Activated CD8-positive, alpha-beta T cell treated with anti-CD3 and anti-CD28 coated beads for 36 hours (primary cell): ENCODE measurements at regions of chr12 and their contacts with region 1.

Region 1: GRCh38 chr12:32671930-32672780 is 6.9 kb upstream of the DNM1L start:
- DNase-seq: peak; percentile 45
- ATAC-seq: no peak
- H3K4me3 Mint-ChIP-seq: no peak overlapping the region
- H3K27ac Mint-ChIP-seq: no peak overlapping the region
- H3K4me1 Mint-ChIP-seq: no peaks in the 10 kb centered on the region
- H3K27me3 Mint-ChIP-seq: peaks cover 3% of the 10 kb centered on the region
- CTCF ChIP-seq: peak; percentile 42

Region 2: DNA sequence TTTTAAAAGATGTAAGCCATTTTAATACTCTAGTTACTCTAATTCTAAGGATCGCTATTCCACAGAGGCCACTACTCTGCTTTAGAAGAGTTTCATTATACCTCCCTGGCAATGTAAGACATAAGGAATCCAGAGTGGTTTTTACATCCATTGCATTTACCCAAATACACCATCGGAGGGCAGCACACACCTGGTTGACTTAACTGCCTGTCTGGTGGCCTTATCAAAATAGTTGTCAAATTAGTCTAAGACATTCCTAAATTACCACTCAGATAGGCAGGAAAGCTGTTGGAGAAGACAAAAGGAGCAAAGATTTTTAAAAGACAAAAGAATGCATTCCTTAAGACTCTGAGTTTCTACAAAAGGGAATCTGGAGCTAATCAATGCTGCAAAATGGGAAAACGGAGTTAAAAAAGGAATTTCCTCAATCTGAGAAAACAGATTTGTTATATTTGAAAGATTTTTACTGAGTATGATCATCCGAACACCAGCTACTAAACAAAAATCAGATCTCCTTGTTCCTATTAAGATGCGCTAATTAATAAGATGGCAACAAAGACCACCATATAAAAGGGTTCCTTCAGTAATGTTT is 306.6 kb before region 1 on chr12:
- CTCF ChIA-PET with region 1: interaction called, 20 read pairs
- POLR2A ChIA-PET with region 1: no interaction called
- intact Hi-C with region 1: no loop called
- DNase-seq: peak; percentile 61
- ATAC-seq: peak; percentile 79
- H3K4me3 Mint-ChIP-seq: no peak overlapping the region
- H3K27ac Mint-ChIP-seq: no peak overlapping the region
- H3K4me1 Mint-ChIP-seq: no peaks in the 10 kb centered on the region
- H3K27me3 Mint-ChIP-seq: no peaks in the 10 kb centered on the region
- CTCF ChIP-seq: peak; percentile 81

Region 3: GRCh38 chr12:32455607-32456071 is 216.5 kb before region 1 on chr12:
- CTCF ChIA-PET with region 1: interaction called, 32 read pairs
- POLR2A ChIA-PET with region 1: no interaction called
- intact Hi-C with region 1: loop called (anchors 5 kb)
- DNase-seq: peak; percentile 22
- ATAC-seq: no peak
- H3K4me3 Mint-ChIP-seq: no peak overlapping the region
- H3K27ac Mint-ChIP-seq: no peak overlapping the region
- H3K4me1 Mint-ChIP-seq: no peaks in the 10 kb centered on the region
- H3K27me3 Mint-ChIP-seq: no peaks in the 10 kb centered on the region
- CTCF ChIP-seq: peak; percentile 72

Region 4: DNA sequence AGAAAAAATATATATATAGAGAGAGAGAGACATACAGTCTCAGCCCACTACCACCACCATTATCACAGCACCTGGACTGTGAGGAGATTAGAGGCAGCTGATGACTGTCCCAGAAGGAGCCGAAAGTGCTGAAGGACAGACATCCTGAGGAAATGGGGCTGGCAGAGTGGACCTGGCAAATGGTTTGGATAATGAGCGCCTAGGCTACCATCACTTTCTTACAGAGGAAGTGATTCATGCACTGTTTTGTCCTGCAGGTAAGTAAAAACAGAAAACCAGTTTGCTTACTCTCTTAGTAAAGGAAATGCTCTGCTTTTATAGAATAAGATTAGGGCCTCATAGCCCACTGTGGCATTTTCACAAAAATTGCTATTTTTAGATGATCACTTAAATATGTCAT is 21.6 kb before region 1 on chr12:
- CTCF ChIA-PET with region 1: no interaction called
- POLR2A ChIA-PET with region 1: no interaction called
- intact Hi-C with region 1: no loop called
- DNase-seq: no peak
- ATAC-seq: no peak
- H3K4me3 Mint-ChIP-seq: no peak overlapping the region
- H3K27ac Mint-ChIP-seq: no peak overlapping the region
- H3K4me1 Mint-ChIP-seq: no peaks in the 10 kb centered on the region
- H3K27me3 Mint-ChIP-seq: no peaks in the 10 kb centered on the region
- CTCF ChIP-seq: no peak

Region 5: GRCh38 chr12:32761716-32762115 is 89.6 kb after region 1 on chr12:
- CTCF ChIA-PET with region 1: no interaction called
- POLR2A ChIA-PET with region 1: no interaction called
- intact Hi-C with region 1: no loop called
- DNase-seq: no peak
- ATAC-seq: no peak
- H3K4me3 Mint-ChIP-seq: no peak overlapping the region
- H3K27ac Mint-ChIP-seq: no peak overlapping the region
- H3K4me1 Mint-ChIP-seq: no peaks in the 10 kb centered on the region
- H3K27me3 Mint-ChIP-seq: peaks cover 2% of the 10 kb centered on the region
- CTCF ChIP-seq: no peak